Heart left ventricle (tissue), 16 donors: ENCODE measurements at regions of chr12 and their contacts with region 1.

Region 1: DNA sequence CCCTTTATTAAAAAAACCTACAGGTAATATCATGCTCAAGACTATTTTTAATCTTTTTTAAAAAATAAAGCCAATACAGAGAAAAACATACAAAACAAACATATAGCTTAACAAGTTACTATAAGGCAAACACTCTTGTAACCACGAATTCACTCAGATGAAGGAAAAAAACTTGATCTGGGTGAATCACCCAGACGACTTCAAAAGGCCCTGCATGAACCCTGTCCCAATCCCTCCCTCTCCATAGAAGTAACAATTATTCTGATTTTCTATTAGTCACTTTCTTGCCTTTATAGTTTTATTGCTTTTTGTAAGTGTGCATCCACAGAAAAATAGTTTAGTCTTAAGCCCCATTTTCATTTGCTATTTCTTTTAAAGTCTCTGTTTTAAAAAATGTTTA is 72.6 kb downstream of the LRP6 start:
- DNase-seq: no peak
- ATAC-seq: no peak
- H3K4me3 ChIP-seq: no peak overlapping the region
- H3K27ac ChIP-seq: no peak overlapping the region
- H3K4me1 ChIP-seq: peaks cover 0 to 11% (median 2%) of the 10 kb centered on the region in 12 donors
- H3K27me3 ChIP-seq: no peaks in the 10 kb centered on the region
- CTCF ChIP-seq: no peak
- POLR2A ChIP-seq: no peak

Region 2: DNA sequence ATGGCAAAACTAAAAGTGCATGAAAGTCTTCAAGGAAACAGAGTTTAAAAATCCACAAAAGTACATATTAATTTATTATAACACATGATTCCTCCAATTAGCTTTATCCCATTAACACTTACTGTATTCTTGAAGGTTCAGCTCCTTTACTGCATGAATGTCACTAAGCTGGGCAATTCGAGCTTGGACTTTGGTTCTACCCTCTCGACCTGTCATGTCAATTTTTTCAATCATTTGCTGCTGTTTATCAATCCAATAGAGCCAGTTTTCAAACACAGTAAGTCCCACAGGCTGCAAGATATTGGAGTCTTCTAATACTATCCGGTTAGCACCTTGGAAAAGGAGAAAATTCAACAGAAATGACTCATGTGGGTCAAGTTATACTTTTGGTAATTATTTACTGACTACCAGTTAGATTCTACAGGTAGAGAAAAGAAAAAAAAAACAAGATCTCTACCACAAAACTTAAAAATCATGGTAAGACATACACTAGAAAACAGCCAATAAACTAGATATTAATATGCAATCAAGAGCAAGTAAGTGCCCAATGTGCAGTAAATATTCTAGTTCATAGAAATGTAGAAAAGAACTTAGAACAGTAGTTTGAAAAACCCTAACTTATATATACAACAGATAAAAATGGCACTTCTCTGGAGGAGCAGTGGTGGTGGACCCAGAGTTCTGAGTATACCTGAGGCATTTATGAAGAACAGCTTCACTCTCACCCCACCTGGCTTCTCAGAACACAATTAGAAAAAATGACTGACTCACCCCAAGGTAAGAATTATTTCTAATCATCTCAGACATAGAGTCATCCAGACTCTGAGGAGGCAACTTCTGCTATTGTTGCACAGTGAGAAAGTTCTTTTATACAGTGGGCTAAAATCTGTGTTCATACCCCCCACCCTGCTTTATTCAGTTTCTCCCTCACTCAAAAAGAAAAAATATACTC is 55.7 kb before region 1 on chr12:
- intact Hi-C with region 1: loop called in 1 of 10 experiments (anchors 10 kb)
- DNase-seq: no peak
- ATAC-seq: no peak
- H3K4me3 ChIP-seq: no peak overlapping the region
- H3K27ac ChIP-seq: no peak overlapping the region
- H3K4me1 ChIP-seq: no peaks in the 10 kb centered on the region
- H3K27me3 ChIP-seq: no peaks in the 10 kb centered on the region
- CTCF ChIP-seq: no peak
- POLR2A ChIP-seq: no peak